Right lobe of liver (tissue), 6 donors: ENCODE measurements at regions of chr1 and their contacts with region 1.

Region 1: GRCh38 chr1:204763706-204764427 is 78.3 kb upstream of the LRRN2 start:
- DNase-seq: peak; percentile 58 to 84 (median 75)
- ATAC-seq: peak; percentile 88 to 100 (median 93)
- H3K4me3 ChIP-seq: no peak overlapping the region
- H3K27ac ChIP-seq: no peak overlapping the region
- H3K4me1 ChIP-seq: no peaks in the 10 kb centered on the region
- H3K27me3 ChIP-seq: peaks cover 0 to 4% of the 10 kb centered on the region in 2 donors
- CTCF ChIP-seq: peak; percentile 57 to 87 (median 74)
- POLR2A ChIP-seq: no peak

Region 2: DNA sequence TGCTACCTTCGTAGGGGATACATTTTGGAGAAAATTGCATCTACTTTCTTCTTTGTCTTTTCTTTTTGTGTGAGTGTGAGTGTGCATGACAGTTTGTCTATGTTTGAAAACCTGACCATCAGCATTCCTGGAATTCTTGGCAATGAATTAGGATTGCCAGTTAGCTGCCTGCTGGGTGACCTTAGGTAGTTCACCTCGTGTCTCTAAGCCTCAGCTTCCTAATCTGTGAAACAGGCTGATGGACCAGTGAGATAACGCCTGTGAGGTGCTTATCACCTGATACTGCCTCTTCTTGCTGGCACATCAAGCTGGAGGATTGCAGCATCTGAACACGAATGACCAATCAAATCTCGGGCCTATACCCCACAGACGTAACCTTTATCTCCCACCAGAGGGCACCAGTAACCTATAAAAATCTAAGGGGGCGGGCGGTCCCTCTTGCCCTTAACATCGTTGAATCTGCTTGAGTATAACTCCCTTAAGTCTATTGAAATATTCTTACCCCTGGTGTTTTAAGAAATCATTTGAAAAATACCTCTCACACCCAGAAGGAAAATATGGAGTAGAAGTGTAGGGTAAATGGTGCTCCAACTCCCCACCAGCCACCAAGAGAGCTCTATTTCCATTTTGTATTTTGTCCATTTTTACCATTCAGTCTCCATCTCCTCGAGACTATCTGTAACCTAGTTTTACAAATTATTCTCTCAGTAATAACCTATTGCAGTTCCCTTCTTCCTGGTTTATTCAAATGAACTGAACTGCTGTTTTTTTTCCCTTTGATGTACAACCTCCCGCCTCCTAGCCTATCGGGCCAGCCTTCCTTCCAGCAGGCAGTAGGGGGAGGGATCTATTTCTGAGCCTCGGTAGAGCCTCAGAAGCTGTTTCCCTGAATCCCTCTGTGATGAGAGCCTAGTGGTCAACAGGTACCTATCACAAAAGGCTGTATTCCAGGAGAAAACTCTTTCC is 198.0 kb before region 1 on chr1:
- intact Hi-C with region 1: loop called in 1 of 2 experiments (anchors 10 kb)
- DNase-seq: peak in 1 of 3 donors; percentile 26
- ATAC-seq: peak; percentile 78 to 95 (median 88)
- H3K4me3 ChIP-seq: no peak overlapping the region
- H3K27ac ChIP-seq: no peak overlapping the region
- H3K4me1 ChIP-seq: no peaks in the 10 kb centered on the region
- H3K27me3 ChIP-seq: no peaks in the 10 kb centered on the region
- CTCF ChIP-seq: peak; percentile 46 to 59 (median 54)
- POLR2A ChIP-seq: no peak

Region 3: GRCh38 chr1:204806943-204807687 is 43.2 kb after region 1 on chr1:
- intact Hi-C with region 1: no loop called
- DNase-seq: peak; percentile 84 to 90 (median 89)
- ATAC-seq: peak; percentile 96 to 97 (median 97)
- H3K4me3 ChIP-seq: peak overlapping the region; percentile 39 to 54 (median 46)
- H3K27ac ChIP-seq: no peak overlapping the region
- H3K4me1 ChIP-seq: peaks cover 0 to 10% (median 0%) of the 10 kb centered on the region in 4 donors
- H3K27me3 ChIP-seq: no peaks in the 10 kb centered on the region
- CTCF ChIP-seq: peak; percentile 96 to 99 (median 98)
- POLR2A ChIP-seq: no peak

Region 4: GRCh38 chr1:205042911-205043806 is 279.3 kb after region 1 on chr1 and contains the start of gene CNTN2:
- intact Hi-C with region 1: no loop called
- DNase-seq: no peak
- ATAC-seq: no peak
- H3K4me3 ChIP-seq: no peak within 1 kb of the TSS
- H3K27ac ChIP-seq: no peak within 1 kb of the TSS
- H3K4me1 ChIP-seq: peaks cover 0 to 29% (median 16%) of the 10 kb centered on the region in 4 donors
- H3K27me3 ChIP-seq: no peaks in the 10 kb centered on the region
- CTCF ChIP-seq: no peak
- POLR2A ChIP-seq: no peak
- total RNA-seq, gene CNTN2: 0.49 TPM in 1 of 6 experiments, not detected in the others